Common myeloid progenitor, CD34-positive (primary cell): ENCODE measurements at regions of chr12 and their contacts with region 1.

Region 1: GRCh38 chr12:10069099-10069498 is 29.7 kb downstream of the CLEC1A start:
- DNase-seq: peak; percentile 81 to 96 (median 92)
- H3K4me3 ChIP-seq: peak overlapping the region in 3 of 7 experiments; percentile 8 to 53 (median 12)
- H3K27ac ChIP-seq: peak overlapping the region; percentile 91 to 96
- H3K4me1 ChIP-seq: peaks cover 24 to 54% (median 34%) of the 10 kb centered on the region in 4 experiments
- H3K27me3 ChIP-seq: no peaks in the 10 kb centered on the region

Region 2: GRCh38 chr12:10058387-10058786 is 10.7 kb before region 1 on chr12:
- CTCF ChIA-PET with region 1: interaction called, 12 read pairs
- POLR2A ChIA-PET with region 1: interaction called, 5 read pairs
- DNase-seq: no peak
- H3K4me3 ChIP-seq: peak overlapping the region in 1 of 7 experiments; percentile 11
- H3K27ac ChIP-seq: no peak overlapping the region
- H3K4me1 ChIP-seq: peaks cover 1 to 45% (median 11%) of the 10 kb centered on the region in 4 experiments
- H3K27me3 ChIP-seq: no peaks in the 10 kb centered on the region

Region 3: DNA sequence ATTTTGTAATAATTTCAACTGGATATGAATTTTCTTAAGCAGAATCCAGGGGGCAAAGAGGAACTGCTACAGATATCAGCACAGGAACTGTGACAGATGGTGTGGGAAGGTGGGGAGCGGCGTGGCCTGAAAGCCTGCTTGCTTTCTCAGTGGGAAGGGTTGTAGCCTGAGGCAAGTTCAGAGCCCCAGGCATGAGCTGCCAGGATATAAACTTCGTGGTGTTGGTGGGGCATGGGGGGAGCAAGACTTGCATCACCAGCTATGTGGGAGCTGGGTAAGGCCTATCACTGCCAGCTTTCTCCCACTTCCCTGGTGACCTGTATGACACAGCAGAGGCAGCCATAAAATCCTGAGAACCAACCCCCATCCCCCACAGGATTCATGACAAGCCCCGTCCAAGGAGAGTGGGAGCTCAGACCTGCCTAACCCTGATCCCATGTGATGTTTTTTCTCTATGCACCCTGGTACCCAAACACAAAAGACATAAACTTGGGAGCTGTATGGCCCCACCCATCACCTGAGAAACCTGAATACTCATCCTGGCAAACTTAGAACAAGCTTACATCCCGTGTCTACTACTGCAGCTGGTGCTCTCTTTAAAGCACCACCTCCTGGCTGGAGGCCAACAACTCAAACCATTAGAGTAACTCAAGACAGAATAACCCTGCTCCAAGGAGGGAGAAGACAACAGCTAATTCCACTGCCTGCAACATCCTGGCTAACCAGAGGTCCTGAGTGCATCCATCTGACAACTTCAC is 13.2 kb after region 1 on chr12:
- CTCF ChIA-PET with region 1: interaction called, 14 read pairs
- POLR2A ChIA-PET with region 1: no interaction called
- DNase-seq: peak in 2 of 3 donors; percentile 71 to 78
- H3K4me3 ChIP-seq: no peak overlapping the region
- H3K27ac ChIP-seq: peak overlapping the region in 1 of 2 experiments; percentile 22
- H3K4me1 ChIP-seq: peaks cover 0 to 15% (median 12%) of the 10 kb centered on the region in 4 experiments
- H3K27me3 ChIP-seq: no peaks in the 10 kb centered on the region